Psoas muscle (tissue), 8 donors: ENCODE measurements at regions of chrX and their contacts with region 1.

Region 1: DNA sequence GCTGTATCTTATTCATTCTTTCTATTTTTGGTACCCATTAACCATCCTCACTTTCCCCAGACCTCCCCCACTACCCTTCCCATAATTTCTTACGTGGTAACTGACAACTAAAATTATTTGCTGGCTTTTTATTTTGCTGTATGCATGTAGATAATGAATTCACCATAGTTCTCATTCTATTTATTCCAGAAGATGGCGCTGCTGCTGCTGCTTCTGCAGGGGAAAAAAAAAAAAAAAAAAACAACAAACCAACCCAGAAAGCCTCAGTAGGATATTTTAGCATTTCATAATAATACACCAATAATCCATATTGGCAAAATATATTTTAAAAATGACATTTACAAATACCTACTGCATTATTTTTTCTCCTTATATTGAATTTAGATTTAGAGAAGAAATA is 416.6 kb upstream of the MAGEB18 start:
- DNase-seq: no peak
- ATAC-seq: no peak
- H3K4me3 ChIP-seq: no peak overlapping the region
- H3K27ac ChIP-seq: no peak overlapping the region
- H3K4me1 ChIP-seq: no peaks in the 10 kb centered on the region
- H3K27me3 ChIP-seq: peaks cover 0 to 5% (median 0%) of the 10 kb centered on the region in 3 donors
- CTCF ChIP-seq: peak; percentile 40

Region 2: GRCh38 chrX:25663701-25664100 is 57.9 kb before region 1 on chrX:
- intact Hi-C with region 1: loop called in 1 of 2 experiments (anchors 10 kb)
- DNase-seq: no peak
- ATAC-seq: no peak
- H3K4me3 ChIP-seq: no peak overlapping the region
- H3K27ac ChIP-seq: no peak overlapping the region
- H3K4me1 ChIP-seq: no peaks in the 10 kb centered on the region
- H3K27me3 ChIP-seq: no peaks in the 10 kb centered on the region
- CTCF ChIP-seq: no peak